ENCODE measurements at regions of chr16 and their contacts with region 1.

Region 1: DNA sequence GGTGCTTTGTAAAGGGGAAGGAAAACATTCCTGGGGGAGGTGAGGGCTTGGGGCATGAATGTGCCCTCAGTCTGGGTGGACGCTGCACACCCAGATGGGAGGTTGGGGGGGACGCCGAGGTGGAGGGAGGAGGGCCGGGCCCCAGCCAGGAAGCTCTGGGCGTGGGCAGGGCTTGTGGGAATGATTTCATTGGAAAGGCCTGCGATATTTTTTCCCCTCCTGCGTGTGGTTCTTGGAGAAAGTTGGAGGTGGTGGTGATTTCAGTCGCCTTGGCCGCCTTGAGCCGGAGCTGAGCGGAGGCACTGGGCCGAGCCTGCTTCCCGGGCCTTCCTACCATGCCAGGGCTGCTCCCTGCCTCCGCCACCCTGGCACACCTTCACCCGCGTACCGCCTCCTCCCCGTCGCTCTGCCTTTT is 26.4 kb upstream of the CLEC18A start:
- DNase-seq: no peak
- H3K4me3 ChIP-seq: peak overlapping the region; percentile 1 to 48 (median 38)
- H3K27ac ChIP-seq: peak overlapping the region; percentile 51 to 77 (median 74)
- H3K4me1 ChIP-seq: peaks cover 32 to 42% (median 40%) of the 10 kb centered on the region in 4 donors
- H3K27me3 ChIP-seq: no peaks in the 10 kb centered on the region
- CTCF ChIP-seq: no peak
- EP300 ChIP-seq: no peak
- POLR2A ChIP-seq: no peak

Region 2: DNA sequence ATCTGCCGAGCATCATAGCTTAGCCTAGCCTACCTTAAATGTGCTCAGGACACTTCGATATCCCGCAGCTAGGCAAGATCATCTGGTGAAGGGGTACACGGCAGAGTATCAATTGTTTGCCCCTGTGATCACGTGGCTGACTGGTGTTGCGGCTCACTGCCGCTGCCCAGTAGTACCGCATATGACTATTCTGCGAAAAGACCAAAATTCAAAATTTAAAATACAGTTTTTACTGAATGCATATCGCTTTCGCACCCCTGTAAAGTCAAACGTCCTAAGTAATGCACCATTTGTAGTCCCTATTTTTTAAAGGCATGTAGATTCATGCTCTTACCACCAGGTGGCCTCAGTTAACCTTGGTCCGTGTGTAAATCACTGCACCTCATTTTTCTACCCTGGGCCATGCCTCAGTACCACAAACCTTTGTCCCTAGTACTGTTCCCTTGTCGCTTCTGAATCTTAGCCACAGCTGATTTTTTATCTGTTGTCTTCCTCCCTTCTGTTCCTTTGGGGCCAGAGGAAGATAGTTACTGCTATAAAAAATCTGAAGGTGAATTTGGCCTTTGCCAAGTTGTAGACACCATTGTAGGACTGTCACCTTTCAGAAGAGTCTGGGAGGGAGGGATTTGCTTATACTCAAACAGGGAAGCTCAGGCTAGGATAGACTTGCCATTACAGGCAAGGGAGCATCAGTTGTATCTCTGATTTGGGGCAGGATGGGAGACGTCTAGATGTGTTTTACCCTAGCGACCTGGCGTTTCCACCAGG is 128.2 kb before region 1 on chr16:
- intact Hi-C with region 1: loop called (anchors 2 kb)
- DNase-seq: no peak
- H3K4me3 ChIP-seq: peak overlapping the region; percentile 20 to 40 (median 26)
- H3K27ac ChIP-seq: no peak overlapping the region
- H3K4me1 ChIP-seq: peaks cover 8 to 22% (median 13%) of the 10 kb centered on the region in 4 donors
- H3K27me3 ChIP-seq: no peaks in the 10 kb centered on the region
- CTCF ChIP-seq: peak; percentile 92 to 95 (median 94)
- EP300 ChIP-seq: no peak
- POLR2A ChIP-seq: no peak

Region 3: DNA sequence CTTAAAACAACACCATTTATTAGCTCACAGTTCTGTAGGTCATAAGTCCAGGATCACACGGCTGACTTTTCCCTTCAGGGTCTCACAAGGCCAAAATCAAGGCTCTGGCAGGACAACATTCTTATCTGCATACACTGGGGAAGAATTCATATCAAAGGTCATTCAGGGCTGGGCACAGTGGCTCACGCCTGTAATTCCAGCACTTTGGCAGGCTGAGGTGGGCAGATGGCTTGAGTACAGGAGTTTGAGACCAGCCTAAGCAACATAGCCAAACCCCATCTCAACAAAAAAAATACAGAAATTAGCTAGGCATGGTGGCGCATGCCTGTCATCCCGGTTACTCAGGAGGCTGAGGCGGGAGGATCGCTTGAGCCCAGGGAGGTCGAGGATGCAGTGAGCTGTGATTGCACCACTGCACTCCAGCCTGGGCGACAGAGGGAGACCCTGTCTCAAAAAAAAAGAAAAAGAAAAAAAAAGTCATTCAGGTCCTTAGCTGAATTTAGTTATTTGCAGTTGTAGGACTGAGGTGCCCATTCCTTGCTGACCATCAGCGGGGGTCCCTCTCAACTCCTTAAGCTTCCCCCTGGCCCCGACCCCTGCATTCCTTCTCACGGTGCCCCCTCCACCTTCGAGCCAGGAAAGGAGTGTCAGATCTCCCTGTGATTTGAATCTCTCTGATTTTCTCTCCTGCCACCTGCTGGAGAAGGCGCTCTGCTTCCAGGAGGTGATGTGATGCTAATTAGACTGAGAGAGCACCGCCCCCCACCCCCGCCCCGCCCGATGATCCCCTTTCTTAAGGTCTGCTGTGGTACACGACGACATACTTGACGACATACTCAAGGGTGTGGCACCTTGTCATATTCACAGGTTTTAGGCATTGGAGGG is 65.4 kb before region 1 on chr16:
- intact Hi-C with region 1: loop called (anchors 5 kb)
- DNase-seq: no peak
- H3K4me3 ChIP-seq: no peak overlapping the region
- H3K27ac ChIP-seq: peak overlapping the region; percentile 78 to 84 (median 84)
- H3K4me1 ChIP-seq: peaks cover 35 to 53% (median 48%) of the 10 kb centered on the region in 4 donors
- H3K27me3 ChIP-seq: no peaks in the 10 kb centered on the region
- CTCF ChIP-seq: peak; percentile 40 to 56 (median 49)
- EP300 ChIP-seq: no peak
- POLR2A ChIP-seq: no peak